ENCODE measurements at regions of chr7 and their contacts with region 1.

Region 1: GRCh38 chr7:134140889-134141867 is 14.0 kb downstream of the LRGUK start:
- DNase-seq: peak; percentile 79
- ATAC-seq: peak; percentile 97
- H3K4me3 Mint-ChIP-seq: no peak overlapping the region
- H3K27ac Mint-ChIP-seq: no peak overlapping the region
- H3K4me1 Mint-ChIP-seq: peaks cover 5% of the 10 kb centered on the region
- H3K27me3 Mint-ChIP-seq: no peaks in the 10 kb centered on the region
- CTCF ChIP-seq: peak; percentile 88

Region 2: DNA sequence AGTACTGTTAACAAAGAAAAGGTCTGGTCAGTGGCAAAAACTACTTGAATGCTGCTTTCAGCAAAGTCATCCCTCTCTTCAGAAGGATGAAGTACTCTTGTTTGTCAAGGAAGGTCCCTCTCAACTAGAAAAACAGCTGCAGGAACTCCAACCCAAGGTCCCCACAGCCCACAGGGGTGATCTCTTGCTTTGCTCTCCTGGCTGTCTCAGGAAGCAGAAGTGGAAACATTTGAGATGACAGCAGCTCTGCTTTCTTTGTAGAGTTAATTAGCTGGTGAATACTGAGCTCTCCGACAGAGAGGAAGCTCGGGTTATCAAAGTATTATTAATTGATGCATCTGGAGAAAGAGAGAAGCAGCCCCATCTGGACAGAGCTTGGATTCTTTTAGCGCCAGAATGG is 39.5 kb before region 1 on chr7:
- CTCF ChIA-PET with region 1: no interaction called
- POLR2A ChIA-PET with region 1: no interaction called
- intact Hi-C with region 1: no loop called
- DNase-seq: no peak
- ATAC-seq: no peak
- H3K4me3 Mint-ChIP-seq: no peak overlapping the region
- H3K27ac Mint-ChIP-seq: no peak overlapping the region
- H3K4me1 Mint-ChIP-seq: no peaks in the 10 kb centered on the region
- H3K27me3 Mint-ChIP-seq: no peaks in the 10 kb centered on the region
- CTCF ChIP-seq: no peak

Region 3: DNA sequence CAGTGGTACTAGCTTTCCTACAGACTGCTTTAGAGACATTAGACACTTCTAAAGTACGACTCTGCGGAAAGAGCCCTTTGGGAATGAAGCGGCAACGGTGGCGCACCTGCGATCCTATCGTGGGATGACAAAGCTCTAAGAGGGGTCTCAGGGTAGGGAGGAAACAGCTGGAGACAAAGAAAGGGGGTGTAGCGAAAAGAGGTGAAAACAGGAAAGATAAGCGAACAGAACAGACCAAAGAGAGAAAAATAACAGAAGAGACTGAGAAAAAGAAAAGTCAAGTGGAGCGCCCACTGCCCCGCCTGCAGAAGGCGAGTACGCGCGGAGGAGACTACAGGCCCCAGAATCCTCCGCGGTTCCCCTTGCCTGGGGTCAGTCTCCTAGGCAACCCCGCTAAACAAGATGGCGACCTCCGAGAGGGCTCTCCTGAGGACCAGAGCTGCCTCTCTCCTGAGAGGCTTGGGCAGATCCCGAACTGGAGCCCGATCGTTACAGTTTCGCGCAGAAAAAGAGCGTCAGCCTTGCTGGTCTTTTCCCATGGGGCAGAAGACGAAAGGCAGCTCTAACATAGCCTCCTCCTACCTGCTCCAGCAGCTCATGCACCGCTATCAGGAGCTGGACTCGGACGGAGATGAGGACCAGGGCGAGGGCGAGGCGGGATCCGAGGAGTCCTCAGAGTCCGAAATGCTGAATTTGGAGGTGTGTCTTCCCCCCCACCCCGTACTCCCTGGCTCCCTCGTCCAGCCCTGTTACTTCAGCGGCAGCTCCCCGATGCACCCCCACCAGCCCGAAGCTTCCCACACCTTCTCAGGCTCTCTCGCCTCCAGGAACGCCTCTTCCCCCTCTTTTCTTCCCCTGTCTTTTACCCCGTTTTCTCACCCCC is 14.0 kb before region 1 on chr7 and contains the start of gene LRGUK:
- CTCF ChIA-PET with region 1: interaction called, 27 read pairs
- POLR2A ChIA-PET with region 1: no interaction called
- intact Hi-C with region 1: no loop called
- DNase-seq: peak; percentile 89
- ATAC-seq: peak; percentile 100
- H3K4me3 Mint-ChIP-seq: peak within 1 kb of the TSS; percentile 79
- H3K27ac Mint-ChIP-seq: no peak within 1 kb of the TSS
- H3K4me1 Mint-ChIP-seq: peaks cover 13% of the 10 kb centered on the region
- H3K27me3 Mint-ChIP-seq: peaks cover 20% of the 10 kb centered on the region
- CTCF ChIP-seq: no peak
- total RNA-seq, gene LRGUK: 0.09 TPM in 1 of 2 experiments, not detected in the other

Region 4: DNA sequence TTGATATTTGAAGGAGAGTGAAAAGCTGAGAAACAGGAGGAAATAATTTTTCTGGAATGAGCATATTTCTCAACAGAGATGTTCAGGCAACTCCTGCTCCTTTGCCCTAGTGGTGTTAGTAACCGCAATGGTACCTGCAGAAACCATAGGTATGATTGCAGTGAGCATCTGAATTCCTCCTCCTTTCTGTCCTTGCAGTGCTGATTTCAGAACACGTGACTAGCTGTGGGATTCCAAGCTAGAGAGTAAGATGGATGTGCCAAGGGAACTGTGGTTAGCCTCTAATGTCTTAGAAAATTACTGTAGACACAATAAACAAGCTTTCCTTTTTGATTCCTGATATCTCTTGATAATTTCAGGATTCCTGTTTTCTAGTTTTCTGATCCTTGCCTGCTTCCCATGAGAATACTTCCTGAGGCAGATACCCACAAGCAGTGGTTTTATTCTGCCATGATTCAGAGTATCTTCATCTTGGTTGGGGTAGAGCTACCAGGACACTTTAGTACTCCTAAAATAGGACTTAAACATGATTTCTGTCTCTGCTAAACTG is 13.5 kb after region 1 on chr7:
- CTCF ChIA-PET with region 1: interaction called, 20 read pairs
- POLR2A ChIA-PET with region 1: no interaction called
- intact Hi-C with region 1: no loop called
- DNase-seq: no peak
- ATAC-seq: no peak
- H3K4me3 Mint-ChIP-seq: no peak overlapping the region
- H3K27ac Mint-ChIP-seq: no peak overlapping the region
- H3K4me1 Mint-ChIP-seq: no peaks in the 10 kb centered on the region
- H3K27me3 Mint-ChIP-seq: no peaks in the 10 kb centered on the region
- CTCF ChIP-seq: no peak